H1 (cell line): ENCODE measurements at regions of chr2 and their contacts with region 1.

Region 1: DNA sequence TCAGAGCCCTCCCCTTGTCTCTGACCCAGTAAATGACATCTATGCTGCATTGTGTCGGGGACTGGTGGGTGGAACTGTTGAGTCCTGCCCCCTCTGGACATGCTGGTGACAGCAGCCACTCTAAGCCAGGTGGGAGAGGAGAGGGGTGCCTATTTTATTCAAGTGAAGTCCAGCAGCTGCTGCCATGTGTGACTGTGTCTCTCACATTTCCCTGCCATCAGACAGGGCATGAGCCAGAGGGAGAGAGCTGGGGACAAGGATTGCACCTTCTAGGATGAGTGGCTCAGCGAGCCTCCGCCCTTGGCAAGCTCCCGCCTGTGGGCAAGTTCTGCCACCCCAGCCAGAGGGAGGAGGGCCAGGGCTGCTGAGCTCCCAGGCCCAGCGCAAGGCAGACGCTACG is 13.7 kb downstream of the NGEF start:
- DNase-seq: no peak
- H3K4me3 ChIP-seq: no peak overlapping the region
- H3K27ac ChIP-seq: no peak overlapping the region
- H3K4me1 ChIP-seq: no peaks in the 10 kb centered on the region; a peak in 1 of 7 replicates
- H3K27me3 ChIP-seq: no peaks in the 10 kb centered on the region
- CTCF ChIP-seq: peak; percentile 9 to 52 (median 42); a peak in 3 of 4 replicates
- EP300 ChIP-seq: no peak
- POLR2A ChIP-seq: no peak
- RAD21 ChIP-seq: peak in 1 of 2 experiments; percentile 30; a peak in 2 of 4 replicates

Region 2: DNA sequence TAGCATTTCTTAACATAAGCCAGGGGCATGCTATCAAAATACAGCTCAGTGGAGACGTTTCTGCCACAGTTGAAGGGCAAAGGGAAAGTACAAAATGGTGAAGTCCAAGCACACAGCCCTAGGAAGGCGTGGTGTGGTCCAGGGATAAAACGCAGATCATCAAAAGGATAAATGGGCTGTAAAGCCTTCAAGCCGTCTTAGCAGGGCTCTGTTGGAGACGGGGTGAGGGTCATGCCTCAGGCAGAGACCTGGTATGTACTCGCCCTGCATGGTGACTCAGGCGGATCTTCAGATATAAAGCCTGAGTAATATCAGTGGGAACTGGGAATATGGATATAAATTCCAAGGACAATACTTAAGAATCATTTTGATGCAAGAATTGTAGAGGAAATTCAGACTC is 47.5 kb before region 1 on chr2:
- CTCF ChIA-PET with region 1: no interaction called
- POLR2A ChIA-PET with region 1: no interaction called
- DNase-seq: no peak
- H3K4me3 ChIP-seq: no peak overlapping the region
- H3K27ac ChIP-seq: no peak overlapping the region
- H3K4me1 ChIP-seq: no peaks in the 10 kb centered on the region; a peak in 1 of 7 replicates
- H3K27me3 ChIP-seq: no peaks in the 10 kb centered on the region; a peak in 1 of 7 replicates
- CTCF ChIP-seq: no peak
- EP300 ChIP-seq: no peak
- POLR2A ChIP-seq: no peak
- RAD21 ChIP-seq: no peak

Region 3: DNA sequence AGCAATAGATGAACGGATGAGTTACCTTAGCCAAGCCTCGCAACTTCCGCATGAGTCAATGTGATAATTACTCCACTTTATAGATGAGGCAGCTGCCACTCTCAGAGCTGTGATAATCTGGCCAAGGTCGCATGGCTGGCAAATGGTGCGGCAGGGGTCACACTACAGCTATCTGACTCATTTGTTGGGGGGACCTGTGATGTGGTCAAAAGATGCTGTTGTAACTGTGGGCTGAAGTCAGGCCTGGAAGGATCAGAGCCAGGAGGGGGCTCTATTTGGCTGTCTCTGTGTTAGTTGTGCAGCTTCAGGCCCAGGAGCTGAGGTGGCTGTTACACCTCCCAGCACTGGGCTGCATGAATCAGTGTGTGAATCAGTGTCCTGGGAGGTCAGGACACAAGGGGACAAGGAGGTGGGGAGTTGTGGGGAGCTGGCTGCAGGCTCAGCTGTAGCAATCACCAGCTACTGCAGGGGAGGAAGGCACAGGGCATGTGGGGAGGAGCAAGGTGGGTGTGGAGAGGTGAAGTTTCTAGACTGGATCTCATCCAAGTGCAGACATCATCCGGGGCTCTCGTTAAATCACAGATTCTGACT is 19.4 kb before region 1 on chr2:
- CTCF ChIA-PET with region 1: interaction called, 13 read pairs
- POLR2A ChIA-PET with region 1: no interaction called
- DNase-seq: no peak
- H3K4me3 ChIP-seq: no peak overlapping the region
- H3K27ac ChIP-seq: no peak overlapping the region
- H3K4me1 ChIP-seq: peaks cover 0 to 14% (median 7%) of the 10 kb centered on the region in 4 experiments; a peak in 5 of 7 replicates
- H3K27me3 ChIP-seq: no peaks in the 10 kb centered on the region; a peak in 1 of 7 replicates
- CTCF ChIP-seq: no peak
- EP300 ChIP-seq: no peak
- POLR2A ChIP-seq: no peak
- RAD21 ChIP-seq: peak in 1 of 2 experiments; percentile 34; a peak in 2 of 4 replicates

Region 4: GRCh38 chr2:233012301-233012971 is 13.1 kb after region 1 on chr2:
- CTCF ChIA-PET with region 1: interaction called, 10 read pairs
- POLR2A ChIA-PET with region 1: no interaction called
- DNase-seq: no peak
- H3K4me3 ChIP-seq: no peak overlapping the region
- H3K27ac ChIP-seq: no peak overlapping the region
- H3K4me1 ChIP-seq: no peaks in the 10 kb centered on the region
- H3K27me3 ChIP-seq: no peaks in the 10 kb centered on the region
- CTCF ChIP-seq: no peak
- EP300 ChIP-seq: no peak
- POLR2A ChIP-seq: no peak
- RAD21 ChIP-seq: no peak

Region 5: DNA sequence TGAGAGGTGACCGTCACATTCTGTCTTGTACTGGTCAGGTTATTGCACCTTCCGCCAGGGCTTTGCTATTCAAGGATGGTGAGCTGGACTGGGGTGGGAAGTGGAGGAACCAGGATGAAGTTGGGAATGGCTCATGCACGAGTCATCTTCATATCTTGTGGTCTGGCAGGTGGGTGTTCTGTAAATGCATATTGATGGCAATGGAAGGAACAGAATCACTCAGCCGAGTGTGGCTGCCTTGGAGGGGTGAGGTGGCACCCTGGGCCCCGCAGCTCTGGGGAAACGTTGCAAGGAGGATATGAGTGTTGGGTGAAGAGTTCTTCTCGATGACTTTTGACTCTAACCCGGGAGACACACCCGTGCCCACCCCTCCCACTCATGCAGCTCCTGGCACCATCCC is 34.3 kb after region 1 on chr2:
- CTCF ChIA-PET with region 1: interaction called, 11 read pairs
- POLR2A ChIA-PET with region 1: no interaction called
- DNase-seq: no peak
- H3K4me3 ChIP-seq: no peak overlapping the region
- H3K27ac ChIP-seq: no peak overlapping the region
- H3K4me1 ChIP-seq: peaks cover 0 to 6% (median 0%) of the 10 kb centered on the region in 4 experiments; a peak in 1 of 7 replicates
- H3K27me3 ChIP-seq: no peaks in the 10 kb centered on the region
- CTCF ChIP-seq: no peak
- EP300 ChIP-seq: no peak
- POLR2A ChIP-seq: no peak
- RAD21 ChIP-seq: no peak